ENCODE measurements at regions of chr22 and their contacts with region 1.

Region 1: GRCh38 chr22:38705235-38706100 is at the start of gene GTPBP1:
- H3K4me3 Mint-ChIP-seq: peak within 1 kb of the TSS; percentile 81
- H3K27ac Mint-ChIP-seq: peak within 1 kb of the TSS; percentile 85
- H3K4me1 Mint-ChIP-seq: peaks cover 48% of the 10 kb centered on the region
- H3K27me3 Mint-ChIP-seq: no peaks in the 10 kb centered on the region

Region 2: GRCh38 chr22:38645430-38645829 is 60.0 kb before region 1 on chr22:
- intact Hi-C with region 1: no loop called
- H3K4me3 Mint-ChIP-seq: no peak overlapping the region
- H3K27ac Mint-ChIP-seq: no peak overlapping the region
- H3K4me1 Mint-ChIP-seq: no peaks in the 10 kb centered on the region
- H3K27me3 Mint-ChIP-seq: peaks cover 3% of the 10 kb centered on the region

Region 3: DNA sequence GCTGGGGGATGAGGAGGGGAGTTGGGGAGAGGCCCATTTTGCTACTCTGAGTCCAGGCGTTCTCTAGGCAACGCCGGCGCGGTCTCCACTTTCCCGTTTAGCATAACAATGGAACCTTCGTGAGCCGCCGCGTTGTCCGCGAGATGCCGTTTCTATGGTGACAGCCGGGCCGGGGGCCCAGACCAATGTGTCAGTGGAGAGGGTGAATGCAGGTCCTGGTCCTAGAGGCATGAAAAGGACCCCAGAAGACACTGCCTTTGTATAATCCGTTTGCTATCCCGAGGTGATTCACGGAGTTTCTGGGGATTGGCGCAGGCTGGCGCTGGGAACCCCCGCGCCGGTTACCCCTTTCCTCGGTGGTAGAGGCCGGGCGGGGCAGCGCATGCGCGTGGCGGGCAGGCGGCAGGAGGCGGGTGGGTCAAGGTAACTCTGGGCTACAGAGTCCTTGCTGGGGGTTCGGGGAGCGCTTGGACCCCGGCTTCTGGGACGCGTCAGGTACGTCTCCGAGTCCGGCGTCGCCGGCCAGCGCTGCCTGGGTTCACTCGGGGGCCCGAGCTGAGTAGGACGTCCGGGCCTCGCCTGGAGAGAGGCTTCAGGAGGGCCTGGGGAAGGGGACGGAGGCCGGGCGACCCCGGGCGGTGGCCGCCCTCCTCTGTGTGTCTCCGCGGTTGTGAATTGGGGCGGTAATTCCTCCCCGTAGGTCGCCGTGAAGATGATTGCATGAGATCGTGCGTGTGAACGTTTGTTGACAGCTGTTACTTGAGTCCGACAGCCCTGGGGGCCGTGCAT is 49.0 kb before region 1 on chr22 and contains the starts of genes CBY1 and FAM227A:
- intact Hi-C with region 1: no loop called
- H3K4me3 Mint-ChIP-seq: peak within 1 kb of the TSS; percentile 90
- H3K27ac Mint-ChIP-seq: peak within 1 kb of the TSS; percentile 95
- H3K4me1 Mint-ChIP-seq: peaks cover 13% of the 10 kb centered on the region
- H3K27me3 Mint-ChIP-seq: no peaks in the 10 kb centered on the region

Region 4: DNA sequence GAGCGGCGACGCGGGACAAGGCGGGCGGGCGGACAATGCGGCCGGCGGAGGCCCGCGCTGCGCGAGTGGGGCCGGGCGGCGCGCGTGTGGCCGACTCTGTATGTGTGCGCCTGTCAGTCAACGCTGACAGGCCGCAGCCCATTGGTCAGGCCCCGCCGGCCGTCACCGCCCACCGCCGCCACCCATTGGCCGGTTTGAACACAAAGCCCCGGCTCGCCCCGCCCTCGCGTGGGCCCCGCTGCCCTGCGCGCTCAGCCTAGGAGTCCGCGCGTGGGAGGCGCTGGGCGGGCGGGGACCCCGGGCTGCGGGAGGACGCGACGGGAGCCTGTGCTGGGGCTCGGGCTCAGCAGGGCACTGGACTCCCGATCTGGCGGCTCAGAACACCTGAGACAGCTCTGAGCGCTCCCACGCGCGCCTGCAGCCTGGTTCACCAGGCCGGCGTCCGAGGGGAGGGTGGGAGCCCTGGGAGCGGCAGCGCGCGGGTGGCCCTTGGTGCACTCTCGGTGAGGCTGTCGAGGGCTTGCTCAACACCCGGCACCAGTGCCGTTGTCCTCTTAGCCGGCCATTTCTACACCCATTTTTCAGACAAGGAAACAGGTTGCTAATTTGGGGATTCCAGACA is 50.6 kb after region 1 on chr22 and contains the start of gene SUN2:
- intact Hi-C with region 1: loop called (anchors 2 kb)
- H3K4me3 Mint-ChIP-seq: peak within 1 kb of the TSS; percentile 77
- H3K27ac Mint-ChIP-seq: peak within 1 kb of the TSS; percentile 90
- H3K4me1 Mint-ChIP-seq: peaks cover 74% of the 10 kb centered on the region
- H3K27me3 Mint-ChIP-seq: no peaks in the 10 kb centered on the region